CD14-positive monocyte (primary cell): ENCODE measurements at regions of chr1 and their contacts with region 1.

Region 1: DNA sequence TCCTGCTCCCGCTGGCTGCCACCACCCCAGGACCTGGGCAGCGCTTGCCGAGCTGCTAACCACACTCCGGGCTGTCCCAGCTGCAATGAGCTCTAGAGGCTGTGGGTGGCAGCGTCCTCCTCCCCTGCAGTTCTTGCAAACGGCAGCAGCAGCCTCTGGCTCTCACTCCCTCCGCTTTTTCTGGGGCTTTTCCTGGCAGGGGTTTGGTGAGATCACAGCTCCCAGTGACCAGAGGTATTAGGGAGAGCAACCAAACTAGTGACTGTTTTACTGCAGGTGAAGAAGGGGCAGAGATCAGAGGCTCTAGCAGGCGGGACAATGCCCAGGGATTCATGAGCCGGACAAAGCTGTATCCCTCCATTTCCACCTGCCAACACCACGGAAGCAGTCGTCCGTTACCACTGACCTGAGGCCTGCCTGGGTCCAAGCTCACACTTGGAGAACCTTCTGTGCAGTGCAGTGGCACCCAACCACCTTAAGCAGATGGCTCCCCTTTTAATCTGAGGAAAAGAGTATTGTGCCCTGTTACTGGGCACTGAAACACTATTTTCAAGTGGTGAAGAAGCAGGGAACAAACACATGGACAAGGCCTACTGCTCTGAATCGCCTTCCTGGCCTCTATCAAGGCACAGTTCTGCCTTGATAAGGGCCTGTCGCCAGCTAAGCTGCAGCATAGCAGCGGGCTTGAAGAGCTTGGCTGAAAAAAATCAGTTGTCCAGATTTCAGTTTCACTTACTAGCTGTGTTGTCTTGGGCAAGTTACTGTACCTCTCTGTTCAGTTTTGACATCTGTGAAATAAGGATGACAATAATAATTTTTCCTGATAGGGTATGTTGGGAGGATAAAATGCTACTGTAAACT is at the start of gene F5:
- DNase-seq: peak; percentile 67 to 82 (median 76)
- H3K4me3 ChIP-seq: peak within 1 kb of the TSS; percentile 52 to 82 (median 81)
- H3K4me3 Mint-ChIP-seq: peak within 1 kb of the TSS; percentile 82 to 92
- H3K27ac ChIP-seq: peak within 1 kb of the TSS; percentile 58 to 98
- H3K27ac Mint-ChIP-seq: peak within 1 kb of the TSS; percentile 93 to 97 (median 95)
- H3K4me1 ChIP-seq: peaks cover 23 to 42% of the 10 kb centered on the region in 2 donors
- H3K4me1 Mint-ChIP-seq: peaks cover 40% of the 10 kb centered on the region
- H3K27me3 ChIP-seq: no peaks in the 10 kb centered on the region
- H3K27me3 Mint-ChIP-seq: peaks cover 0 to 2% (median 1%) of the 10 kb centered on the region in 3 donors
- CTCF ChIP-seq: peak; percentile 71
- polyA plus RNA-seq, gene F5: 6.5 to 14.5 (median 7.1) TPM

Region 2: DNA sequence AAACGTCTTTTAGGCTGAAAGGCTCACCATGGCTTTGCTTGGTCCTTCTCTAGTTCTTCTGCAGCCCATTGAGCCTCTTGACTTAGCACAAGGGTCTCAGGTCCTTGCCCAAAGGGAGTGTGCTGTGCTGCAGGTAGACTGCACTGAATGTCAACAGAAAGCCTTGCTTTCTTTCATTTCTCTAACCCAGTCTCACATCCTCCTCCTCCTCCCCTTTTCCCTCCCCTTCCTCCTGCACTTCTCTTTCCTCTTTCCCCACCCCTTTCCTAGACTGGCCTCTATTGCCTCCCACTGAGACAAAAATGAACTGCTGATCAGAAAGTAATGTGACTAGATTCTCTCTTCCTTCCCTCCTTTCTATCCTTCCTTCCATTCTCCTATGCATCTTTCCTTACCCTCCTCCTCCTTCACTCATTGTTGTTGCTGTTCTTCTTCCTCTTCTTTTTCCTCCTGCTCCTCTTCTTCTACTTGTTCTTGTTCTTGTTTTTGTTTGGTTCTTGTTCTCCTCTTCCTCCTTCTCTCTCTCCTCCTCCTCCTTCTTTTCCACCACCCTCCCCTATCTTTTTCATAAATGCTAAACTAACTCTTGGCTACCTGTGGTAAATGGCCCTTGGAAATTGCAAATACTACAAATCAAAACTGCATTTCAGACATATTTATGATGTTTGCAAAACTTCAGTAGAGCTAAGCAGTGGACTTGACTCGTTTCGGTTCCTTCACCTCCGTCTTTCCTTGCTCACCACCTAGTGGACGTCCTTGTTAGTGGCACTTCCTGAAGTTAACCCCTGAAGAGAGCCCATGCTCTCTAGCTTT is 125.0 kb after region 1 on chr1 and contains the start of gene SELL:
- intact Hi-C with region 1: loop called in 1 of 2 experiments (anchors 5 kb)
- DNase-seq: peak; percentile 75 to 81 (median 80)
- H3K4me3 ChIP-seq: peak within 1 kb of the TSS; percentile 45 to 97 (median 75)
- H3K4me3 Mint-ChIP-seq: peak within 1 kb of the TSS; percentile 84 to 95
- H3K27ac ChIP-seq: peak within 1 kb of the TSS in 1 of 2 donors; percentile 81
- H3K27ac Mint-ChIP-seq: peak within 1 kb of the TSS; percentile 85 to 97 (median 91)
- H3K4me1 ChIP-seq: peaks cover 24 to 56% of the 10 kb centered on the region in 2 donors
- H3K4me1 Mint-ChIP-seq: peaks cover 37% of the 10 kb centered on the region
- H3K27me3 ChIP-seq: no peaks in the 10 kb centered on the region
- H3K27me3 Mint-ChIP-seq: peaks cover 1 to 3% (median 2%) of the 10 kb centered on the region in 3 donors
- CTCF ChIP-seq: peak; percentile 84
- polyA plus RNA-seq, gene SELL: 153 to 1,885 (median 1,118) TPM

Region 3: GRCh38 chr1:169794530-169795416 is 208.1 kb after region 1 on chr1 and contains the start of gene METTL18:
- intact Hi-C with region 1: loop called in 1 of 2 experiments (anchors 10 kb)
- DNase-seq: peak; percentile 76 to 86 (median 78)
- H3K4me3 ChIP-seq: peak within 1 kb of the TSS; percentile 68 to 93 (median 90)
- H3K4me3 Mint-ChIP-seq: peak within 1 kb of the TSS; percentile 98 to 99
- H3K27ac ChIP-seq: peak within 1 kb of the TSS; percentile 69 to 89
- H3K27ac Mint-ChIP-seq: peak within 1 kb of the TSS; percentile 95 to 100 (median 99)
- H3K4me1 ChIP-seq: peaks cover 14 to 15% of the 10 kb centered on the region in 2 donors
- H3K4me1 Mint-ChIP-seq: peaks cover 26% of the 10 kb centered on the region
- H3K27me3 ChIP-seq: no peaks in the 10 kb centered on the region
- H3K27me3 Mint-ChIP-seq: peaks cover 0 to 5% (median 2%) of the 10 kb centered on the region in 3 donors
- CTCF ChIP-seq: no peak
- polyA plus RNA-seq, gene METTL18: 0.68 to 2.5 (median 2.3) TPM

Region 4: GRCh38 chr1:169809370-169810095 is 222.9 kb after region 1 on chr1:
- intact Hi-C with region 1: loop called in 1 of 2 experiments (anchors 10 kb)
- DNase-seq: peak; percentile 27 to 52 (median 37)
- H3K4me3 ChIP-seq: no peak overlapping the region
- H3K4me3 Mint-ChIP-seq: no peak overlapping the region
- H3K27ac ChIP-seq: no peak overlapping the region
- H3K27ac Mint-ChIP-seq: peak overlapping the region in 1 of 7 donors; percentile 68
- H3K4me1 ChIP-seq: no peaks in the 10 kb centered on the region
- H3K4me1 Mint-ChIP-seq: no peaks in the 10 kb centered on the region
- H3K27me3 ChIP-seq: no peaks in the 10 kb centered on the region
- H3K27me3 Mint-ChIP-seq: peaks cover 0 to 2% (median 0%) of the 10 kb centered on the region in 3 donors
- CTCF ChIP-seq: peak; percentile 76

Region 5: GRCh38 chr1:169957884-169958283 is 371.3 kb after region 1 on chr1:
- intact Hi-C with region 1: no loop called
- DNase-seq: no peak
- H3K4me3 ChIP-seq: no peak overlapping the region
- H3K4me3 Mint-ChIP-seq: no peak overlapping the region
- H3K27ac ChIP-seq: no peak overlapping the region
- H3K27ac Mint-ChIP-seq: no peak overlapping the region
- H3K4me1 ChIP-seq: no peaks in the 10 kb centered on the region
- H3K4me1 Mint-ChIP-seq: no peaks in the 10 kb centered on the region
- H3K27me3 ChIP-seq: no peaks in the 10 kb centered on the region
- H3K27me3 Mint-ChIP-seq: peaks cover 0 to 2% (median 0%) of the 10 kb centered on the region in 3 donors
- CTCF ChIP-seq: no peak